MCF 10A (cell line): ENCODE measurements at regions of chr10 and their contacts with region 1.

Region 1: DNA sequence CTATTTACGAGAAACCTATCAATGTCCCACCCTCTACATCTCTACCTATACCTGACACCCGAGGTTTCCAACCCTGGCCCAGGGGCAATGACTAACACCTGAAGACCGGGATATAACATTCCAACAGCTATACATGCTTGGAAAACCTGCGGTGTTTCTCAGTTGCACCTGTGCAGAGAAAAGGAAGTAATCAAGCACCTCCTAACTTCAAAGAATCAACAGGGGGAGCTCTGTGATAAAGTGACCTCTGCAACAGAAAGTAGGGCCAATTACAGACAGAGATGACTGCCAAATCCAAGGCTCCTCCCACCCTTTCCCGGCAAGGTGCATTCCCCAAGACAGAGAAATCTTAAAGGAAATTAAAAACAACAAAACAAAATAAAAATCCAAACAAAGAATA is 41.3 kb downstream of the CCDC6 start:
- DNase-seq: peak; percentile 75
- H3K4me3 Mint-ChIP-seq: no peak overlapping the region
- H3K27ac Mint-ChIP-seq: no peak overlapping the region
- H3K4me1 Mint-ChIP-seq: peaks cover 42% of the 10 kb centered on the region
- H3K27me3 Mint-ChIP-seq: no peaks in the 10 kb centered on the region
- CTCF ChIP-seq: peak; percentile 40

Region 2: DNA sequence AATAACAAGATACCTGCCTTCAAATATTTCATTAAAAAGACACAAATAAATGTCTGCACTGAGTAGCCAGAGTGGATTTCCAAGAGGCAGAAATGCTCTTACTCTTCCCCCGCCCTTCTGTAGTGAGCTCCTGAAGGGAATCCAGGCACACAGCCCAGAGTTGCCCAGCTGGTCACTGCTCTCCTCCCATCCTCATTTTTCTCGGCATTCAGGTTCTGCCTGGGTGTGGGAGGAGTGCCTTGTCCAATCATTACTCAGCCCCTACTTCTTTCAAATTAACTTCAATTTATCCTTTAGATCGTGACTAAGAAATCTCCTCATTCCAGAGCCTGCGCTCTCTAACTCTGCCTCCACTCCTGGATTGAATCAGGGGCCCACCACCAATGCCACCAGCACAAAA is 29.0 kb after region 1 on chr10:
- CTCF ChIA-PET with region 1: interaction called, 25 read pairs
- POLR2A ChIA-PET with region 1: interaction called, 5 read pairs
- intact Hi-C with region 1: no loop called
- DNase-seq: peak; percentile 66
- H3K4me3 Mint-ChIP-seq: no peak overlapping the region
- H3K27ac Mint-ChIP-seq: peak overlapping the region; percentile 78
- H3K4me1 Mint-ChIP-seq: peaks cover 47% of the 10 kb centered on the region
- H3K27me3 Mint-ChIP-seq: no peaks in the 10 kb centered on the region
- CTCF ChIP-seq: no peak

Region 3: GRCh38 chr10:59913547-59914237 is 48.6 kb after region 1 on chr10:
- CTCF ChIA-PET with region 1: interaction called, 127 read pairs
- POLR2A ChIA-PET with region 1: interaction called, 130 read pairs
- intact Hi-C with region 1: no loop called
- DNase-seq: no peak
- H3K4me3 Mint-ChIP-seq: no peak overlapping the region
- H3K27ac Mint-ChIP-seq: no peak overlapping the region
- H3K4me1 Mint-ChIP-seq: peaks cover 1% of the 10 kb centered on the region
- H3K27me3 Mint-ChIP-seq: no peaks in the 10 kb centered on the region
- CTCF ChIP-seq: no peak

Region 4: GRCh38 chr10:59991661-59992060 is 126.6 kb after region 1 on chr10:
- CTCF ChIA-PET with region 1: interaction called, 15 read pairs
- POLR2A ChIA-PET with region 1: interaction called, 3 read pairs
- intact Hi-C with region 1: no loop called
- DNase-seq: peak; percentile 57
- H3K4me3 Mint-ChIP-seq: peak overlapping the region; percentile 59
- H3K27ac Mint-ChIP-seq: peak overlapping the region; percentile 94
- H3K4me1 Mint-ChIP-seq: peaks cover 16% of the 10 kb centered on the region
- H3K27me3 Mint-ChIP-seq: no peaks in the 10 kb centered on the region
- CTCF ChIP-seq: no peak

Region 5: DNA sequence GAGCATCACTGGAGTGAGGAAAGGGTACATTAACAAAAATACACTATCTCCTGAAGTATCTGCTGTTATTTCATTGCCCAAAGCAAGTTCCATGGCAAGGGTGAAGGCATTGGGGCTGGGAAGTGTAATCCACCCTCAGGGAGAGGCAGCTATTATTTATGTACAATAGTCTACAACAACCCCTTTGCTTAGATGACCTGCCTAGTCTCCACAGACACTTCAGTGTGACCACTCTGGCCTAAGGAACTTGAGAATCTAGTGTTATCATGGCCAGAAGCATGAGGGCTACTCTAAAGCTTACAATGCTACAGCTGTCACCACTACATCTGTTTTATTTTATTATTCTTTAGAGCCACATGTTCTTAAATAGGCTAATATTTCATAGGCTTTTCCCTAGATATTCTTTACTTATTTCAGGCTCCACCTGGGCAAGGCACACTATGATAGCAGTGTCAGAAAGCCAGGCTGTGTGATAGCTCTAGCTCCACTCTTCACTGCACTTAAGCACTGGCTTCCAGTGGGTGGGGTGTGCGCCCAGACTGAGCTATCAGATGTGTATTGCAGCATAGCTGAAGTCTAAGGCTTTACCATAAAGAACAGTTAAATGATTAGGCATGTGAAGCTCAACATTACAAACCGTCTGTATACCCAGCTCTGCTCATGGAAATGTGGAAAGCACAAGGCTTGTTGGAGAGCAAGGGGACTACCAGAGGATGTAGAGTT is 158.2 kb after region 1 on chr10:
- CTCF ChIA-PET with region 1: interaction called, 11 read pairs
- POLR2A ChIA-PET with region 1: no interaction called
- intact Hi-C with region 1: no loop called
- DNase-seq: no peak
- H3K4me3 Mint-ChIP-seq: no peak overlapping the region
- H3K27ac Mint-ChIP-seq: no peak overlapping the region
- H3K4me1 Mint-ChIP-seq: no peaks in the 10 kb centered on the region
- H3K27me3 Mint-ChIP-seq: no peaks in the 10 kb centered on the region
- CTCF ChIP-seq: no peak

Region 6: GRCh38 chr10:60032723-60033122 is 167.6 kb after region 1 on chr10:
- CTCF ChIA-PET with region 1: interaction called, 20 read pairs
- POLR2A ChIA-PET with region 1: no interaction called
- intact Hi-C with region 1: loop called (anchors 1 kb)
- DNase-seq: peak; percentile 77
- H3K4me3 Mint-ChIP-seq: no peak overlapping the region
- H3K27ac Mint-ChIP-seq: no peak overlapping the region
- H3K4me1 Mint-ChIP-seq: no peaks in the 10 kb centered on the region
- H3K27me3 Mint-ChIP-seq: no peaks in the 10 kb centered on the region
- CTCF ChIP-seq: peak; percentile 58

Region 7: DNA sequence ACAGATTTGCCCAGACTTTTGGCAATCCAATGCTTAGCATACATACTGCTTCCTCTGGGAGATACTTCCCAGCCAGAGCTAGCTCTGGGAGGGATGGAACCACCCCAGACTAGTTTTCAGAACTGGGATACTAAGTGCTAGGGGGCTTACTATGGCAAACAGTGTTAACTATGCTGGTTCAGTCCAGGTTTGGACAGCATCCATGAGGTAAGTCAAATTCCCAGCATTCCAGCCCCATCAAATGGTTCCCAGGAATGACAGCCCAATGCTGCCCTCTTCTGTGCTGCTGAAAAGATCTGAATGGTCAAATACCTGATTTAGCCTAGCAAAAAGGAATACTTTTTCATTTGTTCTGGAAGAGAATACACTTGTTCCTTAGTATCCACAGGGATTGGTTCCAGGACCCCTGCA is 183.0 kb after region 1 on chr10:
- CTCF ChIA-PET with region 1: interaction called, 25 read pairs
- POLR2A ChIA-PET with region 1: no interaction called
- intact Hi-C with region 1: loop called (anchors 1 kb)
- DNase-seq: peak; percentile 44
- H3K4me3 Mint-ChIP-seq: no peak overlapping the region
- H3K27ac Mint-ChIP-seq: no peak overlapping the region
- H3K4me1 Mint-ChIP-seq: no peaks in the 10 kb centered on the region
- H3K27me3 Mint-ChIP-seq: no peaks in the 10 kb centered on the region
- CTCF ChIP-seq: peak; percentile 18